ENCODE measurements at regions of chr1 and their contacts with region 1.

Region 1: GRCh38 chr1:193471981-193472380 is 285.6 kb upstream of the B3GALT2 start:
- DNase-seq: peak; percentile 12
- H3K4me3 Mint-ChIP-seq: no peak overlapping the region
- H3K27ac Mint-ChIP-seq: peak overlapping the region; percentile 25
- H3K4me1 Mint-ChIP-seq: peaks cover 13% of the 10 kb centered on the region
- H3K27me3 Mint-ChIP-seq: no peaks in the 10 kb centered on the region
- CTCF ChIP-seq: no peak

Region 2: DNA sequence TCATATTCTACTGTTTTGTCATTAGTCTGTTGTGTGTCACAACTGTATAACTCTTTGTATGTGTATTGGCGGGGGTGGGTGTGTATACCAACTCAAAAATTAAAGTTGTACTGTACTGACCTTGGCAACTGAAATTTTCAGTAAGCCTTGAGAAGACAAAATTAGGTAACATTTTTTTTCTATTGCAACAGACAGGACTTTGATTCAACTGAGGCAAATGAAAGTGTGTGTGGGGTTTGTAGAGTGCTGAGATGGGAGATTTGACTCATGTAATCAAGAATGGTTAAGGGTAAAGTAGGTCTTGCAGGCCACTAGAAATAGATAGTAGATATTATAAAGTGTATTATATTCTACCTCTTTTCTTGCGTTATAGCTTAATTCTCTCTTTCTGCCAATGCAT is 271.0 kb before region 1 on chr1:
- CTCF ChIA-PET with region 1: no interaction called
- intact Hi-C with region 1: no loop called
- DNase-seq: no peak
- H3K4me3 Mint-ChIP-seq: no peak overlapping the region
- H3K27ac Mint-ChIP-seq: peak overlapping the region; percentile 27
- H3K4me1 Mint-ChIP-seq: peaks cover 22% of the 10 kb centered on the region
- H3K27me3 Mint-ChIP-seq: no peaks in the 10 kb centered on the region
- CTCF ChIP-seq: no peak

Region 3: GRCh38 chr1:193434319-193434718 is 37.7 kb before region 1 on chr1:
- CTCF ChIA-PET with region 1: no interaction called
- intact Hi-C with region 1: loop called (anchors 1 kb)
- DNase-seq: no peak
- H3K4me3 Mint-ChIP-seq: no peak overlapping the region
- H3K27ac Mint-ChIP-seq: no peak overlapping the region
- H3K4me1 Mint-ChIP-seq: peaks cover 32% of the 10 kb centered on the region
- H3K27me3 Mint-ChIP-seq: no peaks in the 10 kb centered on the region
- CTCF ChIP-seq: no peak

Region 4: DNA sequence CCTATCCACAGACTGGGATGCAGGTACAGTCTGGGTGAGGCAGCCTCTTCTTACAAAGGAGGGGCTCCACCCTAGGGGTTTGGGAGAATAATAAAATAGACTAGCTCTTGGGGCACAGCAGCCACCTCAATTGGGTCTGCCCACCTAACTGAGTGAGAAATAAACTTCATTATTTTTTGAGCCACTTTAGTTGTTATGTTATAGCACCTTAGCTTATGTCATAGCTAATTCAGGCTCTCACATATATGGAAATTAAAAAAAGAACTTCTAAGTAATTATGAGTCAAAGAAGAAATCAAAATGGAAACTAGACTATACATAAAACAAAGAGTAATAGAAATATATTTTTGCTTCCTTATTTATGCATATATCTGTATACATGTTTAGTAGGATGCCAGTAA is 32.9 kb after region 1 on chr1:
- CTCF ChIA-PET with region 1: no interaction called
- intact Hi-C with region 1: no loop called
- DNase-seq: no peak
- H3K4me3 Mint-ChIP-seq: no peak overlapping the region
- H3K27ac Mint-ChIP-seq: no peak overlapping the region
- H3K4me1 Mint-ChIP-seq: no peaks in the 10 kb centered on the region
- H3K27me3 Mint-ChIP-seq: no peaks in the 10 kb centered on the region
- CTCF ChIP-seq: no peak